Endothelial cell of umbilical vein (primary cell): ENCODE measurements at regions of chr22 and their contacts with region 1.

Region 1: DNA sequence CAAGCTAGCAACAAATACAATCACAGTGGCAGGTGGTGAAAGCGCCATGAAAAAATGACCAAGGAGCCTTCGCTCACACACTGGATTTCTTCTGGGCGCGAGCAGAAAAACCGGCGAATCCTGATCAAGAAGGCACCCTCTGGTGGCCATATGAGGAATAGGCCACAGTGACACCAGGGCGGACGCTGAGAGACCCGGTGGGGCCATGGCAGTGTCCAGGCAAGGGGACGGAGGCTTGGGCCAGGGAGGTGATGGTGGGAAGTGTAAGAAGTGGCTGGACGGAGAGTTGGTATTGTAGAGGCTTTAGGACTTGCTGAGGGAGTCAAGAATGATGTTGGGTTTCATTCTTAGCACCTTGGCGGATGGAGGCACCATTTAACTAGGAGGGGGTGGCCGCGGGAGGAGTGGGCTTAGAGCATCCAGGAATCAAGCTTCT is 16.9 kb upstream of the RAC2 start:
- DNase-seq: peak; percentile 55
- H3K4me3 ChIP-seq: no peak overlapping the region
- H3K27ac ChIP-seq: no peak overlapping the region
- H3K4me1 ChIP-seq: peaks cover 9% of the 10 kb centered on the region
- H3K27me3 ChIP-seq: no peaks in the 10 kb centered on the region
- CTCF ChIP-seq: peak; percentile 91 to 92
- POLR2A ChIP-seq: no peak

Region 2: DNA sequence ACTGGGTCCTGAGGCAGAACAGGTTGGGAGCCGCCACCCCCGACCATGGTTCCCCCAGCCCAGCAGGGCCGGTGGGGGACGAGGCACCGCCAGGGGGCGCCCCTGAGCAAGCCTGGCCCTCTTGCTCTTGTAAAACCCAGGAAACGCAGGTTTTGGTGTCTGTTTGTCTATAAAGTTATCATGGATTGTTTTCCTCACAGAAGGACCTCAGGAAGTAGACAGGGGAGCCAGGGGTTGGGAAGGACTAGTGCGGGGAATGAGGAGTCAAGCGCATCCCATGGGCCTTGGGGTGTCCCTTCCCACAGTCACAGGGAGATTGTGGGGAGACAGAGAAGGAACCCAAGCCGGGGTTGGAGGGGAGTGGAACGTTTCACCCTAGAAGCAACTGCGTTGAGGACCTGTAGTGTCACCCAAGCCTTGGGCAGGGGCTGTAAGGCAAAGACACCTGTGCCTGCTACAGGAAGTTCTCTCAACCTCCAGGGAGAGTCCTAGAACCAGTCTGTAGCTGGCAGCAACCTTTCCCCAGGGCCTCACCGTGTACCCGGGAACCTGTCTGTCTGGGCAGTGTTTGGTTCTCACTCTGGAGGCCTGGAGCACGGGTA is 182.9 kb before region 1 on chr22:
- CTCF ChIA-PET with region 1: interaction called, 4 read pairs
- POLR2A ChIA-PET with region 1: no interaction called
- dilution Hi-C with region 1: no loop called
- intact Hi-C with region 1: loop called (anchors 2 kb)
- DNase-seq: peak; percentile 38
- H3K4me3 ChIP-seq: no peak overlapping the region
- H3K27ac ChIP-seq: no peak overlapping the region
- H3K4me1 ChIP-seq: peaks cover 9% of the 10 kb centered on the region
- H3K27me3 ChIP-seq: peaks cover 0 to 6% of the 10 kb centered on the region in 2 experiments
- CTCF ChIP-seq: peak; percentile 98 to 99
- POLR2A ChIP-seq: no peak

Region 3: DNA sequence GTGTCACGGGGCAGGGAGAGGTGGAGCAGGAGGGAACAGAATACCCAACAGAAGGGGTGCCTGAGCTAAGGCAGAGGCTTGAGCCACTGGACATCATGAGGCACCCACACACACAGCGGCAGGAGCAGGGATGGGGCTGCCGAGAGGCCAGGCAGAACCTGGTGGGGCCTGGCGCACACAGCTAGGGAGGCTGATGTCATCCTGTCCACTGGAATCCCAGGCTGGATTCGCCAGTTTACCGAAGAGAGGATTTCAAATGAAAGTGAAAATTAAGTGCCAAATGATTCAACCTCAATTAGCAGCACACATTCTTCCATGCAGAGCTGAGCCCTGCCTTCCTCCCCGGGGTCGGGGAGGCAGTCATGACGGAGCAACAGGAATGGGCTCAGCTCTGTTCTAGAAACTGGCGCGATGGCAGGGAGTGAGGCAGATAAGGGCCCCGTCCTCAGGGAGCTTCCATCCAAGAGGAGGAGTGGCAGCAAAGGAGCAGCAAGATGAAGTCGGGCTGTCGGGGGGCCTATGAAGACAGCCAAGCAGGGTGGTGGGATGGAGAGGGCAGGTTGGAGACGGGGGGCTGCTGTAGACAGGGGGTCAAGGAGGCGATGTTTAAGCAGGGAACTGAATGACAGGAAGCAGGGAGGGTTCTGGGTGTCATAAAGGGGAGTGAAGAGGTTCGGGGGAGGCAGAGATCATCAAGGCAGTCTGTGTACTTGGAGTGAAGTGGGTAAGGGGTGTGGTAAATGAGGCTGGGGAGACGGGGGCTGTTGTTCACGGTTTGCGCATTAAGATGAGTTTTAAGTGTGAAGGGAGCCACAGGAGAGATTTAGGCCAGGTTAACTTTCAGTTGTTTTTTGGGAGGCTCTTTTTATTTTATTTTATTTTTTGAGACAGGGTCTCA is 23.3 kb before region 1 on chr22:
- CTCF ChIA-PET with region 1: interaction called, 83 read pairs
- POLR2A ChIA-PET with region 1: no interaction called
- dilution Hi-C with region 1: no loop called
- intact Hi-C with region 1: no loop called
- DNase-seq: no peak
- H3K4me3 ChIP-seq: no peak overlapping the region
- H3K27ac ChIP-seq: no peak overlapping the region
- H3K4me1 ChIP-seq: peaks cover 18% of the 10 kb centered on the region
- H3K27me3 ChIP-seq: no peaks in the 10 kb centered on the region
- CTCF ChIP-seq: no peak
- POLR2A ChIP-seq: no peak

Region 4: DNA sequence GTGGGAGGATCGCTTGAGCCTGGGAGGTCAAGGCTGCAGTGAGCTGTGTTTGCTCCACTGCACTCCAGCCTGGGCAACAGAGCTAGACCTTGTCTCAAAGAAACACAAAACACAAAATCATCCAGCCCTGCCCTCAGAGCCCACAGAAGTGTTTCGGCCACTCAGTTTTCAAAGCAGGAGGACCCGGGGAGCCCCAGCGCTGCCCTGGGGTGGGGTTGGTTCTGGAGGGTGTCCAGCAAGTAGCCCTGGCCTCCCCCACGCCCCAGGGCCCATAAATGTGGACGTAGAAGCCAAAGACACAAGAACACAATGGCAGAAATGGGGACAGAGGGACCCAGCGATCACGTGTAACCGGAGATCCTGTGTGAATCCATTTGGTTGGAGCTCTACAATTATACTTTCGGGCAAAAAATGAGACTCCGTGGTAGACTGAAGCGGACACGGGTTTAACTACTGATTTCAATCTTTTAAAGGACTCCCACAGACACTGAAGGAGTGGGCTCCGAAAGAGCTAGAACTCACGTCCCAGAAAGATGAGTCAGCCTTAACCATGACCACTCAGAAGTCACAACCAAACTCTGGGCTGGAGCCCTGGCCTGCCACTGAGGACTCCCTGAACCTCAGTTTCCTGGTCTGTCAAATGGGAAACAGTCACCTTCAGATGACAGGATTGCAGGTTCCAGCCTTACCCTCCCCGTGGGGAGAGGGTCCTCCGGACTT is 12.4 kb after region 1 on chr22:
- CTCF ChIA-PET with region 1: interaction called, 31 read pairs
- POLR2A ChIA-PET with region 1: no interaction called
- dilution Hi-C with region 1: no loop called
- intact Hi-C with region 1: no loop called
- DNase-seq: no peak
- H3K4me3 ChIP-seq: no peak overlapping the region
- H3K27ac ChIP-seq: no peak overlapping the region
- H3K4me1 ChIP-seq: peaks cover 11% of the 10 kb centered on the region
- H3K27me3 ChIP-seq: no peaks in the 10 kb centered on the region
- CTCF ChIP-seq: no peak
- POLR2A ChIP-seq: no peak

Region 5: GRCh38 chr22:37316875-37317371 is 56.0 kb after region 1 on chr22:
- CTCF ChIA-PET with region 1: interaction called, 11 read pairs
- POLR2A ChIA-PET with region 1: no interaction called
- dilution Hi-C with region 1: no loop called
- intact Hi-C with region 1: no loop called
- DNase-seq: peak; percentile 82
- H3K4me3 ChIP-seq: no peak overlapping the region
- H3K27ac ChIP-seq: no peak overlapping the region
- H3K4me1 ChIP-seq: peaks cover 6% of the 10 kb centered on the region
- H3K27me3 ChIP-seq: no peaks in the 10 kb centered on the region
- CTCF ChIP-seq: peak; percentile 93
- POLR2A ChIP-seq: no peak